Endothelial cell of umbilical vein (primary cell): ENCODE measurements at regions of chr12 and their contacts with region 1.

Region 1: DNA sequence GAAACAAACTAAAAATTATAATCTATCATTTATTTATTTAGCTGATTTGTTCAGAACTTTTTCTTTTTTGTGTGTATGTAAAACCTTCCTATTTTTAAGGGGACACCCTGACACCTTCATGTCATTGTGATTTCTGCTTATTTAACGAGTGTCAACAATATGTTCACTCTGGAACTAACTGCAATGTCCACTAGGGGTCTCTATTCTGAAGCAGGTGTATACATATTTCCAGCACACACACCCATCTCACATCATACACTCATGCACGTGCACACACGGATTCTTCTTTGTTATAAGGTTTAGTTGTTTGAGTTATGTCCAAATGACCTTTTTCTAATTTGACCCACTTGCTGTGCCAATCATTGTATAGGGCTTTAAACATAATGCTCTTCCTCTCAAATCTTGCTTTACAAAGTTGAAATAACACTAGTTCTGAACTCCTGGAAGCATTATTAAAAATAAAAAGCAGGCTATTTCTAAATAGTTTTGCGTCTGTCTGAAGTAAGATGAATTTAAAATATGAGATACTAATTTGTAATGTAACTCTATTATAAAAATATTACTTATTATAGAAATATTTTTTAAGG is 15.5 kb downstream of the E2F7 start:
- DNase-seq: peak; percentile 78
- H3K4me3 ChIP-seq: no peak overlapping the region
- H3K27ac ChIP-seq: no peak overlapping the region
- H3K4me1 ChIP-seq: no peaks in the 10 kb centered on the region
- H3K27me3 ChIP-seq: no peaks in the 10 kb centered on the region
- CTCF ChIP-seq: peak; percentile 60 to 64
- POLR2A ChIP-seq: no peak

Region 2: GRCh38 chr12:76984566-76984965 is 65.3 kb before region 1 on chr12:
- CTCF ChIA-PET with region 1: no interaction called
- POLR2A ChIA-PET with region 1: no interaction called
- dilution Hi-C with region 1: no loop called
- intact Hi-C with region 1: no loop called
- DNase-seq: no peak
- H3K4me3 ChIP-seq: no peak overlapping the region
- H3K27ac ChIP-seq: no peak overlapping the region
- H3K4me1 ChIP-seq: no peaks in the 10 kb centered on the region
- H3K27me3 ChIP-seq: peaks cover 0 to 2% of the 10 kb centered on the region in 2 experiments
- CTCF ChIP-seq: no peak
- POLR2A ChIP-seq: no peak

Region 3: GRCh38 chr12:77003246-77003645 is 46.6 kb before region 1 on chr12:
- CTCF ChIA-PET with region 1: no interaction called
- POLR2A ChIA-PET with region 1: no interaction called
- dilution Hi-C with region 1: no loop called
- intact Hi-C with region 1: no loop called
- DNase-seq: no peak
- H3K4me3 ChIP-seq: no peak overlapping the region
- H3K27ac ChIP-seq: no peak overlapping the region
- H3K4me1 ChIP-seq: no peaks in the 10 kb centered on the region
- H3K27me3 ChIP-seq: peaks cover 0 to 35% of the 10 kb centered on the region in 2 experiments
- CTCF ChIP-seq: no peak
- POLR2A ChIP-seq: no peak

Region 4: DNA sequence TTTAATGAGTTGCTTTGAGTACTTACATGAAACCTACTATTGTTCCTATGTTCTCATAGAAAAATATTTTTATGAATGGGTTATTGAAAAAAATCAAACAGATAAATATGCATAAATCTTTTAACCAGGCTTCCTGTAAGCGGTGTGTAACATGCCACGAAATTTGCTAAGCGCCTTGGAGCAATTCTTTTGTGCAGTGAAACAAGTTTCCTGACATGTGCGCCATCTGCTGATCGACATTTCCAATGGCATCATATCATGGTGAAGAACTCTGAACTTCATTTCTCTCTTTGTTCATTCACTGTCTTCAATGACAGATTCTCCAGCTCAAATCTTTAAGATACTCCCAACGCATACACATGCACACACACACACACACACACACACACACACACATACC is 635.3 kb after region 1 on chr12:
- CTCF ChIA-PET with region 1: interaction called, 25 read pairs
- POLR2A ChIA-PET with region 1: no interaction called
- dilution Hi-C with region 1: no loop called
- intact Hi-C with region 1: loop called (anchors 1 kb)
- DNase-seq: peak; percentile 80
- H3K4me3 ChIP-seq: no peak overlapping the region
- H3K27ac ChIP-seq: no peak overlapping the region
- H3K4me1 ChIP-seq: peaks cover 2% of the 10 kb centered on the region
- H3K27me3 ChIP-seq: peaks cover 0 to under 1% of the 10 kb centered on the region in 2 experiments
- CTCF ChIP-seq: peak; percentile 54 to 57
- POLR2A ChIP-seq: no peak